A673 (cell line): ENCODE measurements at regions of chr7 and their contacts with region 1.

Region 1: GRCh38 chr7:7303726-7304125 is 121.4 kb downstream of the C1GALT1 start:
- DNase-seq: no peak
- H3K4me3 ChIP-seq: no peak overlapping the region
- H3K27ac ChIP-seq: no peak overlapping the region
- H3K4me1 ChIP-seq: no peaks in the 10 kb centered on the region
- H3K27me3 ChIP-seq: no peaks in the 10 kb centered on the region
- CTCF ChIP-seq: no peak

Region 2: DNA sequence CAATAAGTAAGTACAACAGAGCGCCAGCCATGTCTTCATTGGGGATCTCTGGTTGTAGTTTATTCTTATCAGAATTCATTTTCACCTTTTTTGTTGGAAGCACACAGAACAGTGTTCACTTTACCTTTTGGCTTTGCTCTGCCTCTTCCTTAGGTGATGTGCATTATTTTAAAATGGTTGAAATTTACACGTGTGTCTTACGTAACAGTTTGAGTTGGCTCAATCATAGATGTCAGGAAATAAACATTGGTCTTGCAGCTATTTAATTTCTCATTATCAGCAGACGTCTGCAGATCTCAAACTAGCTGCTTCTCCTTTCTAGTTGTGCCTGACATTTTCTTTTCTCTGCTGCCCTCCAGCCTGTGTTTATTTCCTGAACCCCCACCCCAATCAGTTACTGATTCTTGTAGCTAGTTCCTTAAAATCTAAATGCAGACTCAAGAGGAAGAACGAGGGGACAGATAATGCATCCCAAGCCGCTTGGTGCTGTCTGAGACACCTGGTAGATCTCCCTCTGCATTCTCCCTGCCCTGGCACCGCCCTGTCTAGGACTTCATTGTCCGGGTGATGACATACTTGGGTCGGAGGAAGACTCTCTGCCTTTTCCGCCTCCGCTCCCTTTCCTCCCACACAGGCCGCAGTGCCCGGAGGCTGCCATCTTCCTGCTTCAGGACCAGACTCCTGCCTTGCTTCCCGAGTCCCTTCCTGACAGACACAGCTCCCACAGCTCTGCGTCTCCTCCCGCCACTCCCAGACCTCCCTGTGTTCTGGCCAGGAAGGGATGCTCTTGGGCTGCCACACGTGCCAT is 1164.3 kb before region 1 on chr7:
- CTCF ChIA-PET with region 1: no interaction called
- POLR2A ChIA-PET with region 1: no interaction called
- intact Hi-C with region 1: no loop called
- DNase-seq: no peak
- H3K4me3 ChIP-seq: no peak overlapping the region
- H3K27ac ChIP-seq: no peak overlapping the region
- H3K4me1 ChIP-seq: no peaks in the 10 kb centered on the region
- H3K27me3 ChIP-seq: no peaks in the 10 kb centered on the region
- CTCF ChIP-seq: no peak

Region 3: GRCh38 chr7:7292085-7292484 is 11.6 kb before region 1 on chr7:
- CTCF ChIA-PET with region 1: no interaction called
- POLR2A ChIA-PET with region 1: no interaction called
- intact Hi-C with region 1: no loop called
- DNase-seq: no peak
- H3K4me3 ChIP-seq: no peak overlapping the region
- H3K27ac ChIP-seq: no peak overlapping the region
- H3K4me1 ChIP-seq: no peaks in the 10 kb centered on the region
- H3K27me3 ChIP-seq: no peaks in the 10 kb centered on the region
- CTCF ChIP-seq: no peak

Region 4: DNA sequence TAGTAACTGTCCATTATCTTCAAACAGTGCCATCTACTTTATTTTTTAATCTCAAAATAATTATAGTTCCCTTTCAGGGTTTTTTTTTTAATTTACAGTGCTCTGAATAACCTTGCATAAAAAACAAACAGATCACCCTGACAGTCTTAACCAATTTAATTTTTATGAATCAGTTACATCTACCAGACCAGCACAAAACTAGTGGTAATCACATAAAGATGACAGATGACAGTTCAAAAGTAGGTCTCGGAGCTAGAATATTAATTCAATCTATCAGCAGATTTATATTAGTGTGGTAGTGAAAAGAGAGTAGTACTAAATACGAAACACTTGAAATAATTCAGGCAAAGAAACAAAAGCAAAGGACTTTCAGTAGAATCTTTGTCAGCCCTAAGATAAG is 178.1 kb after region 1 on chr7:
- CTCF ChIA-PET with region 1: no interaction called
- POLR2A ChIA-PET with region 1: interaction called, 13 read pairs
- intact Hi-C with region 1: no loop called
- DNase-seq: no peak
- H3K4me3 ChIP-seq: no peak overlapping the region
- H3K27ac ChIP-seq: no peak overlapping the region
- H3K4me1 ChIP-seq: no peaks in the 10 kb centered on the region
- H3K27me3 ChIP-seq: no peaks in the 10 kb centered on the region
- CTCF ChIP-seq: no peak

Region 5: GRCh38 chr7:7614018-7614741 is 310.5 kb after region 1 on chr7:
- CTCF ChIA-PET with region 1: no interaction called
- POLR2A ChIA-PET with region 1: no interaction called
- intact Hi-C with region 1: no loop called
- DNase-seq: no peak
- H3K4me3 ChIP-seq: no peak overlapping the region
- H3K27ac ChIP-seq: no peak overlapping the region
- H3K4me1 ChIP-seq: no peaks in the 10 kb centered on the region
- H3K27me3 ChIP-seq: no peaks in the 10 kb centered on the region
- CTCF ChIP-seq: no peak